Caco-2 (cell line): ENCODE measurements at regions of chr5 and their contacts with region 1.

Region 1: DNA sequence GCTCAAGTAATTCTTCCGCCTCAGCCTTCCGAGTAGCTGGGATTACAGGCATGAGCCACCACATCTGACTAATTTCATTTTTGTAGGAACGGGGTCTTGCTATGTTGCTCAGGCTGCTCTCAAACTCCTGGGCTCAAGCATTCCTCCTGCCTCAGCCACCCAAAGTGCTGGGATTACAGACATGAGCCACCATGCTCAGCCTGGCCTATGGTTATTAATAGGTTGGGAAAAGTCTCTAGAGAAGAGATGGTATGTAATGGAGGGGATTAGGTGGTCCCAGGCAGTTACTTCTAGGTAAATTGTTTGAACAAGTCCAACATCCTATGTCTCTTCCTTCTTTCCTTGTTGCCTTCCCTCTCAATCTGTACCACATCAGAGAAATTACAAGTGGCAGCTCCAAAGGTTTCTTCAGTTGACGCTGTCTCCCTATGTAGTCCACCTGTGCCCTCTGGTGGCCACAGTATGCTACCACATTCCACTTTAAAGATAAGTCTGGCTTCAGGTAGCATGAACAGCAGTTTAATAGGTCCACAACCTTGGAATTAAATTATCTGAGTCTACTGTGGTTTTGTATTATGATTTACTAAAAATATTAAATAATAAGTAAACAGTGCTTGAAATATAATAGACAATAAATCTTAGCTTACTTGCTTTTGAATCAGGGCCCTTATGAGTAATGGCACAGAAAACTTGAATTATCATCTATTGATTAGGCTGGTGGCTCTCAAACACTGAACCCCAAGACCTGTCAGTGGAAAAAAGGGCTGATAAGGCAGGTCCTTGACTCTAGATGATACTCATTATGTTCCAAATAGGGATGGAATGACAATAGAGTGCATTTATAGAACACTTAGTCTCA is 9.7 kb downstream of the TIGD6 start:
- DNase-seq: peak; percentile 77 to 80
- H3K4me3 ChIP-seq: no peak overlapping the region
- H3K4me3 Mint-ChIP-seq: no peak overlapping the region
- H3K27ac Mint-ChIP-seq: no peak overlapping the region
- H3K4me1 ChIP-seq: peaks cover 22% of the 10 kb centered on the region
- H3K4me1 Mint-ChIP-seq: peaks cover 21% of the 10 kb centered on the region
- H3K27me3 ChIP-seq: no peaks in the 10 kb centered on the region
- H3K27me3 Mint-ChIP-seq: no peaks in the 10 kb centered on the region
- CTCF ChIP-seq: peak; percentile 94 to 95

Region 2: DNA sequence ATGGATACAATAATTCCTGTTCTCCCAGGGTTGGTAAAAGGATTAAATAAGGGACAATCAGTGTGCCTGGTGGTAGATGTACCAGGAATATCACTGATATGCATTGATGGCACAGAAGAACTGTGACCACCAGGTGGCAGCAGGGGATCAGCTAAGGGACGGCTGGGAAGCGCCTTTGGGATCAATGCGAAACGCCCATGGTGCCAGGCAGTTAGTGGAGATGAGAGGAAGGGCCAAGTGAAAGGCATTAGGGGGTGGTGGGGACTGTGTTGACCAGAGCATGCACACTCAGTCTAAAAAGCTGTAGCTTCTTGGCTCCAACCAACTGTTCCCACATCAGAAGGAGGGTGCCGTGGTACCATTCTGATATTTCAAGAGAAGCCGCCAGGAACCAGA is 353.9 kb before region 1 on chr5:
- CTCF ChIA-PET with region 1: no interaction called
- POLR2A ChIA-PET with region 1: no interaction called
- intact Hi-C with region 1: loop called (anchors 2 kb)
- DNase-seq: peak; percentile 89 to 91
- H3K4me3 ChIP-seq: no peak overlapping the region
- H3K4me3 Mint-ChIP-seq: no peak overlapping the region
- H3K27ac Mint-ChIP-seq: no peak overlapping the region
- H3K4me1 ChIP-seq: peaks cover 10% of the 10 kb centered on the region; the same call in 1 of the 2 replicates
- H3K4me1 Mint-ChIP-seq: no peaks in the 10 kb centered on the region
- H3K27me3 ChIP-seq: no peaks in the 10 kb centered on the region
- H3K27me3 Mint-ChIP-seq: no peaks in the 10 kb centered on the region
- CTCF ChIP-seq: peak; percentile 90 to 95

Region 3: DNA sequence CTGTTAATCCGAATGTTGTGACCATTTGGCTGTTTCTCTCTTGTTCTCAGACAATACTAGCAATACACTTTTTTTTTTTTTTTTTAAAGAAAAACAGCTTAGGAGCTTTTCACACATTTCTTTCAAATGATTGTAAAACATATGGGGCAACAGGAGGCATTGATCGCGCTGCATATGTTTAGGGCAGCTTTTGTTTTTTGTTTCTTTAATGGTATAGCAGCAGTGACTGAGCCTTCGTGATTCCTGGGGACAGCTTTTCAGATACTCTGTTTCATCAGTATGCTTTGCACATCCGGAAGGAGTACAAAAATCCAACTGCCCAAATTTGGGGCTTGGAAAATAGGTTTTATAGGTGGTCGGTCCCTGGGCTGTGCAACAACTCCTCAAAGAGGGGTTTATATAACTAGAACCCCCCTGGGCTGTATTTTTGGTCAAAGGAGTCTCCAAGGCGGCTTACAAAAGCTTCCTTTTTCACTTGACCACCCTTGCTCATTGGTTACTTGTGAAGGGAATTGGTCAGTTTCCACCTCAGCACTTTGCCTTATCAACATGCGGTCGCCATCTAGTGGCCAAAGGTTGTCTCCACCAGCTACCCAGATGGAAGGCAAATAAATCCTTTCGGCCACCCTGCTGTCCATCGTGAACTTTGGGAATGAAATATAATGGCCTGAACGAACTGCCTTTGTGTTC is 138.0 kb before region 1 on chr5:
- CTCF ChIA-PET with region 1: interaction called, 24 read pairs
- POLR2A ChIA-PET with region 1: no interaction called
- intact Hi-C with region 1: loop called (anchors 5 kb)
- DNase-seq: peak; percentile 79 to 81
- H3K4me3 ChIP-seq: no peak overlapping the region
- H3K4me3 Mint-ChIP-seq: no peak overlapping the region
- H3K27ac Mint-ChIP-seq: no peak overlapping the region
- H3K4me1 ChIP-seq: no peaks in the 10 kb centered on the region
- H3K4me1 Mint-ChIP-seq: no peaks in the 10 kb centered on the region
- H3K27me3 ChIP-seq: no peaks in the 10 kb centered on the region
- H3K27me3 Mint-ChIP-seq: no peaks in the 10 kb centered on the region
- CTCF ChIP-seq: peak; percentile 83 to 86

Region 4: DNA sequence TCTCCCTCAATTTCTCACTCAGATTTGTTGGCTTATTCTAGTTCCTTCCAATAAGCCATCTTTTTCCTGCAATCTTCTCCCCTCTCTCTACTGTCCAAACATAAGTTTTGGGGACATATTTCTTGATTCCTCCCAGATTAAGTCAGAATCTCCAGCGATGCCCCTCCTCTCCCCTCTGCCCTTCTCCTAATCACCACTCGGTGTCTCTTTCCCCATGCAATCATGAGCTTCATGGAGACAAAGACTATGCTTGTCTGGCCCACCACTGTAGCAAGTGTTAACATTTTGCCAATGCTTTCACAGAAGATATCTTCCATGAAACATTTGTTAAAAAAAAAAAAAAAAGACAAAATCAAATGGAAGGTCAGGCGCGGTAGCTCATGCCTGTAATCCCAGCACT is 88.6 kb before region 1 on chr5:
- CTCF ChIA-PET with region 1: interaction called, 15 read pairs
- POLR2A ChIA-PET with region 1: no interaction called
- intact Hi-C with region 1: loop called (anchors 1 kb)
- DNase-seq: peak; percentile 43 to 48
- H3K4me3 ChIP-seq: no peak overlapping the region
- H3K4me3 Mint-ChIP-seq: no peak overlapping the region
- H3K27ac Mint-ChIP-seq: peak overlapping the region; percentile 36
- H3K4me1 ChIP-seq: peaks cover 11% of the 10 kb centered on the region
- H3K4me1 Mint-ChIP-seq: peaks cover 20% of the 10 kb centered on the region
- H3K27me3 ChIP-seq: no peaks in the 10 kb centered on the region
- H3K27me3 Mint-ChIP-seq: no peaks in the 10 kb centered on the region
- CTCF ChIP-seq: peak; percentile 46 to 62

Region 5: DNA sequence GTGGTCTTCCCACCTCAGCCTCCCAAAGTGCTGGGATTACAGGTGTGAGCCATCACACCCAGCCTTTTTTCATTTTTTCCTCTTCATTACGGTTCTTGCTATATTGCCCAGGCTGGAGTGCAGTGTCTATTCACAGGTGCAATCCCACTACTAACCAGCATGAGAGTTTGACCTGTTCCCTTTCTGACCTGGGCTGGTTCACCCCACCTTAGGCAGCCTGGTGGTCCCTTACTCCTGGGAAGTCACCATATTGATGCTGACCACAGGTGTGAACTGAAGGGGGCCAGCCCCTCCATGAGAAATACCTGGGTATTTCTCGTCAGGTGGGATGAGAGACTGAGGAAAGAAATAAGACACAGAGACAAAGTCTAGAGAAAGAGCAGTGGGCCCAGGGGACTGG is 48.5 kb before region 1 on chr5:
- CTCF ChIA-PET with region 1: no interaction called
- POLR2A ChIA-PET with region 1: no interaction called
- intact Hi-C with region 1: loop called (anchors 2 kb)
- DNase-seq: no peak
- H3K4me3 ChIP-seq: no peak overlapping the region
- H3K4me3 Mint-ChIP-seq: peak overlapping the region; percentile 53
- H3K27ac Mint-ChIP-seq: peak overlapping the region; percentile 87
- H3K4me1 ChIP-seq: peaks cover 84% of the 10 kb centered on the region
- H3K4me1 Mint-ChIP-seq: peaks cover 66% of the 10 kb centered on the region
- H3K27me3 ChIP-seq: no peaks in the 10 kb centered on the region
- H3K27me3 Mint-ChIP-seq: no peaks in the 10 kb centered on the region
- CTCF ChIP-seq: peak in 1 of 2 experiments; percentile 19

Region 6: GRCh38 chr5:149953436-149954121 is 37.2 kb before region 1 on chr5:
- CTCF ChIA-PET with region 1: no interaction called
- POLR2A ChIA-PET with region 1: no interaction called
- intact Hi-C with region 1: no loop called
- DNase-seq: no peak
- H3K4me3 ChIP-seq: no peak overlapping the region
- H3K4me3 Mint-ChIP-seq: no peak overlapping the region
- H3K27ac Mint-ChIP-seq: no peak overlapping the region
- H3K4me1 ChIP-seq: peaks cover 18% of the 10 kb centered on the region
- H3K4me1 Mint-ChIP-seq: peaks cover 2% of the 10 kb centered on the region
- H3K27me3 ChIP-seq: no peaks in the 10 kb centered on the region
- H3K27me3 Mint-ChIP-seq: no peaks in the 10 kb centered on the region
- CTCF ChIP-seq: no peak